ENCODE measurements at regions of chr21 and their contacts with region 1.

Region 1: GRCh38 chr21:33127154-33127893 is 57.4 kb downstream of the OLIG1 start:
- DNase-seq: peak; percentile 42 to 95 (median 86)

Region 2: GRCh38 chr21:32858628-32859027 is 268.7 kb before region 1 on chr21:
- intact Hi-C with region 1: no loop called
- DNase-seq: no peak

Region 3: DNA sequence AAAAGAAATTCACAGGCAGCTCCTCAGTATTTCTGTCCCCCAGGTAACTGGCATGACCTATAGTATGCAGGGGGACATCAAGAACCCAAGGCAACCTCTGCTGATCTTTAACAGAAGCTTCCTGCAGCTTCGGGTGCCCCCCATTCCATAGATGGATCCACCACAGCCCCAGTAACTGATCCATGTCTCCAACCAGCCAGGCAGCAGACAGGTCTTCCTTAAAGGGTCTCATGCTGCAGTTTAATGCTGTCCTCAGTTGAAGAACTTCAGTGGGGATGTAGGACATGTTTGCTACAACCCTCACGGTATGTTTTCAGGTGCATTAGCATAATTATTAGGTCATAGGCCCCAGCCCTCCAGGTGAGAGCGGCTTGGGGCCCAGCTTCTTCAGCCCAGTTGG is 192.5 kb before region 1 on chr21:
- intact Hi-C with region 1: loop called (anchors 5 kb)
- DNase-seq: peak in 1 of 42 donors; percentile 8

Region 4: GRCh38 chr21:33007747-33008146 is 119.6 kb before region 1 on chr21:
- intact Hi-C with region 1: loop called (anchors 10 kb)
- DNase-seq: no peak

Region 5: DNA sequence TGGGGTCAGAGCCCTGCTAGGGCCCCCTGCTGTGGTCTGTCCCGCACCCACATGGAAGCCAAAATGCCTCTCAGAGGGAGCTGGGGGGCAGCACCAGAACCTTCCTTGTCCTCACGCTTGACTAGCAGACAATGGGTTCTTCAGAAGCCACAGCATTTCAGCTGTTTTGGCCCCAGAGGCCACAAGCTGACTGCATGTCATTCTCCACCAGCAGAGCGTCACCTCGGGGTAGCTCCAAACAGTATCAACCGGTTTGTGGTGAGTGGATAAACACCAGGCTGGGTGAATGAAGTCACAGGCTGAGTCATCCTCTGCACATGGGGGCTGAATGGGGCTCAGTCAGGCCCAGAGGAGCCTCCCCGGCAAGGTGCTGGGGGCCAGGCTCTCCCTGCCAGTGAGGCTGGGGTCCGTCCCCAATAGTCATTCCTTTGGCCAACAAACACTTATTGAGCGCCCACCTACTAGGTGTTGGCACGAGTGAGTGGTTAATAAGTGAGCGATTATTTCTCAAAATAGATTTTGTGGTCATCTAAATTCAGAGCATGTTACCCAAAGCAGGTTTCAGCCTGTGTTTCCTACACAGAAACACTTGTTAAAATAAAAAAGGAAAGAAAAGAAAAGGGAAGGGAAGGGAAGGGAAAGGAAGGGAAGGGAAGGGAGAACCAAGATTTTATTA is 48.3 kb before region 1 on chr21:
- intact Hi-C with region 1: loop called (anchors 2 kb)
- DNase-seq: peak; percentile 68 to 96 (median 89)